Activated T-helper 1 cell treated with anti-CD3 and anti-CD28 coated beads, Interleukin-12 subunit alpha, Interleukin-12 subunit beta, Interleukin-2, Interleukin-4 antibody, amounts not matched to agents 30 ng/mL and 10 ng/mL and 1 ng/mL, durations not matched to agents 14 hours and 24 hours and 36 hours (primary cell): ENCODE measurements at regions of chr16 and their contacts with region 1.

Region 1: DNA sequence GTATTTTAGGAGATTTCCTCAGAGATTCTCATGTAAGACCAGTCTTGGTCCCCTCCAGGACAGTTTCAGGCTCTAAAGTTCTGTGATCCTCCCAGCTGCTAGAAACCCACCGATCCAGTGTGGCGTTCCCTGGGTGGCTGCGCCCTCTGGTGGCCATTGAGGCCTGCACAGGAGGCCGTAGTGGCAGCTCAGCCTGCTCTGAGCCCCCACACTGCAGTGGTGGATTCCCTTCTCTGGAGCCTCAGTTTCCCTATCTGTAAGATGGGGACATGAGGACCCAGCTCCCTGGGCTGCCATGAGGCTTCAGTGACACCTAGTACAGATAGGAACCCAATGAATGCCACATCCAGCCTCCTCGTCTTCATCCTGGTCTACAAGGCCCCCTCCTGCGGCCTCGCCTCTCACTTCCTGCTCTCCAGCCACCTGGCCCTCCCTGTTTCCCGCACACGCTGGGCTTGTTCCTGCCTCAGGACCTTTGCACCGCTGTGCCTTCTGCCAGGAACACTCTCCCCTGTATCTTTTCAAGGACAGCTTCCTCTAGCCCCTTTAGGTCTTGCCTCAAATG is 16.5 kb downstream of the CCDC102A start:
- DNase-seq: peak; percentile 69
- H3K4me3 Mint-ChIP-seq: no peak overlapping the region
- H3K27ac Mint-ChIP-seq: peak overlapping the region; percentile 65
- H3K4me1 Mint-ChIP-seq: peaks cover 21% of the 10 kb centered on the region
- H3K27me3 Mint-ChIP-seq: no peaks in the 10 kb centered on the region

Region 2: DNA sequence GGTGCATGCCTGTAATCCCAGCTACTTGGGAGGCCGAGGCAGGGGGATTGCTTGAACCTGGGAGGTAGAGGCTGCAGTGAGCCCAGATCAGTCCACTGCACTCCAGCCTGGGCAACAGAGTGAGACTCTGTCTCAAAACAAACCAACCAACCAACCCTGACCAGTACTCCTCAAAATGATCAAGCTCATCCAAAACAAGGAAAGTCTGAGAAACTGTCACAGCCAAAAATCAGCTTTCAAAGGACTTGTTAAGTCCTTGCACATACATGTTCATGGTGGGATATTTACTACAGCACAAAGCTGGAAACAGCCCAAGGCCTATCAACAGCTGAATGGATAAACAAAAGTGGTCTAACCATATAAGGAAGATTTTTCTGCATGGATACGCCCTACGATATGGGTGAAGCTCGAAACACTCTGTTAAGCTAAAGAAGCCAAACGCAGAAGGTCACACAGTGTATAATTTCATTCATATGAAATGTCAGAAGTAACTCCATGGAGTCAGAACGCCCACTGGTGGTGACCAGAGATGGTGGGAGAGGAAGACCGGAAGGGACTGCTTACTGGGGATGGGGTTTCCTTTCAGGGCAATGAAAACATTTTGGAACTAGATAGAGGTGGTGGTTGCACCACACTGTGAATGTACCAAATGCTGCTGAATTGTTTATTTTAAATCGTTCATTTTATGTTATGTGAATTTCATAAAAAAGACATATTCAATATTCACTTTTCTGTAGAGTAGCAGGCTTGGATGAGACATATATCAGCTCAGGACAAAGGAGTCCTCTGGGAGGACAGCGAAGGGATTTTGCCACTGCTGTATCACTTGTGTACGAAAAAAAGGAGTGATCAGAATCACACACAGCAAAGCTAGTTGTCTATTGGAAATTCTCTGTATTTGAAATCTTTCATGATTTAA is 97.6 kb before region 1 on chr16:
- intact Hi-C with region 1: loop called (anchors 1 kb)
- DNase-seq: no peak
- H3K4me3 Mint-ChIP-seq: no peak overlapping the region
- H3K27ac Mint-ChIP-seq: no peak overlapping the region
- H3K4me1 Mint-ChIP-seq: peaks cover 14% of the 10 kb centered on the region
- H3K27me3 Mint-ChIP-seq: no peaks in the 10 kb centered on the region

Region 3: GRCh38 chr16:57432989-57433388 is 86.9 kb before region 1 on chr16:
- intact Hi-C with region 1: no loop called
- DNase-seq: no peak
- H3K4me3 Mint-ChIP-seq: no peak overlapping the region
- H3K27ac Mint-ChIP-seq: no peak overlapping the region
- H3K4me1 Mint-ChIP-seq: no peaks in the 10 kb centered on the region
- H3K27me3 Mint-ChIP-seq: no peaks in the 10 kb centered on the region

Region 4: DNA sequence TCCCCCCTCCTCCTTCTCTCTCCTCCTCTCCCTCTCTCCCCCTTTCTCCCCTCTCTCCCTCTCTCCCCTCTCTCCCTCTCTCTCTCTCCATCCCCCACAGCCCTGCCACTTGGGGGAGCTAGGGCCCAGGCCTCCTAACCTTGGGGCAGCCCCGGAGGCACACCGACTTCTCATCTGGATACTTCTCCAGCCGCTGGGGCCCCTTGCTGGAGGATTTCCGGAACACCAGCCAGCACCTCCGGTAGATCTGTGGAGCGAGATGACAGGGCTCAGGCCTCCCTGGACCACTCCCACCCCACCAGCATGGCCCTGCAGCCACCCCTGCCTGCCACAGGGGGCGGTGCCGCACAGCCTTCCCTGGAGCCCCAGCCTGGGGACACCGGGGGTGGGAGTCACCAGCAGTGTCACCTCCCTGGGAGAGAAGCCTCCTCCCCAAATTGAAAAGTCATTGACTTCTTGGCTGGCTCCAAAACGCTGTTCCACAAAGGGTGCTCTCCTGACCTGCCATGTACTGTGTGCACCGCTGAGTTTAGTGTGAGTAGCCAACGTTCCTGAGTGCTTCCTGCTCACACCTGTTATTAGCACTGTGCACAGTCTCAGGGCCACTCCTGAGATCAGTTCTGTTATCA is 44.1 kb before region 1 on chr16:
- intact Hi-C with region 1: loop called (anchors 1 kb)
- DNase-seq: peak; percentile 81
- H3K4me3 Mint-ChIP-seq: peak overlapping the region; percentile 45
- H3K27ac Mint-ChIP-seq: peak overlapping the region; percentile 52
- H3K4me1 Mint-ChIP-seq: peaks cover 18% of the 10 kb centered on the region
- H3K27me3 Mint-ChIP-seq: no peaks in the 10 kb centered on the region

Region 5: DNA sequence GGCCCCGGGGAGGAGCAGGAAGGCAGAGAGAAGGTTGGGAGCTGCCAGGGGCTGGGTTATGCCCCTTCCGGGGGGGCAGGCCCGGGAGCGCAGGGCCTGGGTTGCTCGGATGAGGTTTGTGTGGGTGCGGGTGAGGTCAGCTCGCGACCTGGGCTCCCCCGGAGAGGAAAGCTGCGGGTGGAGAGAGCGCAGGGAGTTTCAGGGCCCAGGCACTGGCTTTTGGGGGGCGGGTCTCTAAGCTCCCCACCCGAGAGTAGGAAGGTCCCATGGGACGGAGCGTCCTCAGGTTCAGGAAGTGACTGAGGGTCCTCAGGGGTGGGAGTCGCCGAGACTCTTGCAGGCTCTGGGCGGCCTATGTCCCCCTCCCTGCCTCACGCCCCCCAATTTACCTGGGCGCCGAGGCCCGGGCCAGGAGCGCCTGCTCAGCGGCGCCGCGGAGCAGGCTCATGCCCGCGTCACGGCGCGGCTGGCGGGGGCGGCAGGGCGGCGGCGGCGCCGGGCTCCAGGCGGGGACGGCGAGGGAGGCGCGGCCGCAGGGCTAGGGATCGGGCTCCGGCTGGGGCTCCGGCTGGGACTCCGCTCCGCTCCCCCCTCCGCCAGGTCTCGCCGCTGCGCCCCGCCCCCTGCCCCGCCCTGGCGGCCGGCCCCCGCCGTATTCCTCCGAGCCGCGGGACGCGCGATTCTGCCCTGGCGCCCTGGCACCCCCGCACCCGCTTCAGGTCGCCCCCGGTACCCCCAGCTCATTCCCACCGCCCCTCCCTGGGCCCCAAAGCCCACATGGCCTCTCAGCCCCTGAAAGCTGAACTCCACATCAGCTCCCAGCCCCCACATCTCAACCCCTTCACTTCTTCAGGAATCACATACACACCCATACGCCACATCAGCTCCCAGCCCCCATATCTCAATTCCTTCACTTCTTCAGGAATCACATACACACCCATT is 33.7 kb before region 1 on chr16 and contains the start of gene DOK4:
- intact Hi-C with region 1: no loop called
- DNase-seq: peak; percentile 71
- H3K4me3 Mint-ChIP-seq: peak within 1 kb of the TSS; percentile 84
- H3K27ac Mint-ChIP-seq: peak within 1 kb of the TSS; percentile 61
- H3K4me1 Mint-ChIP-seq: peaks cover 20% of the 10 kb centered on the region
- H3K27me3 Mint-ChIP-seq: peaks cover 20% of the 10 kb centered on the region
- total RNA-seq, gene DOK4: 4.4 and 4.9 TPM in 2 replicates

Region 6: DNA sequence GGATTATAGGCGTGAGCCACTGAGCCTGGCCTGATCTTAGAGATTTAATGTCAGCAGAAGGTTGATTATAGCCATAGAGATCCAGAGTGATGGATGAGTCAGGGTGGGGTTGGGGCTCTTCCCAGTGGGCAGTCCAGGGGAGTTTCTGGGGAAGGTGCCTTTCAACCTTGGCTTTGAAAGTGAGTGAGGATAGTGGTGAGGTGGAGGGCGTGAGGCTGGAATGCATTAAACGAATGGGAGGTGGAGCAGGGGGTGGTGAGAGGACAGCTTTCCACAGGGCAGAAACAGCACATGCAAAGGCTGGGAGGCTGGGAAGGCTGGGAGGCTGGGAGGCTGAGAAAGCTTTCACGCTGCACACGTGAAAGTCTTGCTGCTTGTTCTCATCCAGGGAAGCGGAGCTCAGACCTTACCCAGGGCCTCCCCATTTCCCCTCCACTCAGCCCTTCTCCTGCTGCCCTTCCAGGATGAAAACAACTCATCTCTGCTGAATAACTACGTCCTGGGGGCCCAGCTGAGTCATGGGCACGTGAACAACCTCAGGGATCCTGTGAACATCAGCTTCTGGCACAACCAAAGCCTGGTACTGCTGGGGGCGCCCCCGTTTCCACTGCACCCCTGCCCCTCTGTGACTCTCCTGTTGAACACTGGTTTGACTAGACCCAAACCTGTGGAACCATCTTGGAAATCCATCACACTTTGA is 44.8 kb after region 1 on chr16:
- intact Hi-C with region 1: no loop called
- DNase-seq: no peak
- H3K4me3 Mint-ChIP-seq: no peak overlapping the region
- H3K27ac Mint-ChIP-seq: no peak overlapping the region
- H3K4me1 Mint-ChIP-seq: no peaks in the 10 kb centered on the region
- H3K27me3 Mint-ChIP-seq: no peaks in the 10 kb centered on the region

Region 7: DNA sequence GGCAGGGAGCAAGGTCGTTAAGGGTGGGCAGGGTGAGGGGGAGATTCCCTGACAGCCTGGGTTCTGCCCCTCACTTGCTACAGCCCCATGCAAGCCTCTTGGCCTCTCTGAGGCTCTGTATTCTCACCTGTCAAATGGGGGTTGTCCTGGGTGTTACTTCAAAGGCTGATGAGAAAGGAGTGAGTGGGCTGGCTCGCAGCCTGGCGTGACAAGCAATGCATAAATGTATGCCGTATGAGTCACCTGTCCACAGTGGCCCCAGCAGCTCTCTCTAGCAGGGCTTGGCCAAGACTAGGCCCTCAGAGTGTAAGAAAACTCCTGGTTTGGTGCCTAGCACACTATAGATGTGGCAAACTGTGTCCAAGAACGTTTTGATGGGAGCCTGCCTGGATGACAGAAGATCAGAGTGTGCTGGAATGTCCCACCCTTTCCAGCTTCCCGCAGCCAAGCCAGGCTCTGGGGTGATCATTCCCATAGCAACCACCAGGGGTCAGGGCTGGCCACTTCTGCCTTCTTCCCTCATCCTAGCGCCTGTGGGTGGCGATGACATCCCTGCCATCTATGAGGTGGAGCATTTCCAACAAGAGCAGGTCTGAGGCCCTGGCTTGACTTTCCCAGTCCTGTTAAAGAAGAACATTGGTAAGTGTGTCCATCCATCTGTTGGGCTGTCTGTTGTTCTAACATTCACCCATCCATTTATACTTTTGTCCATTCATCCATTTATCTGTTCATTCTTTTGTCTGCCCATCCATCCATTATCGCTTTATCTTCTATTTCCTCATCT is 71.4 kb after region 1 on chr16:
- intact Hi-C with region 1: no loop called
- DNase-seq: peak; percentile 56
- H3K4me3 Mint-ChIP-seq: peak overlapping the region; percentile 63
- H3K27ac Mint-ChIP-seq: peak overlapping the region; percentile 85
- H3K4me1 Mint-ChIP-seq: peaks cover 55% of the 10 kb centered on the region
- H3K27me3 Mint-ChIP-seq: peaks cover 2% of the 10 kb centered on the region